Sigmoid colon (tissue), 7 donors: ENCODE measurements at regions of chr6 and their contacts with region 1.

Region 1: GRCh38 chr6:27687154-27688013 is 214.5 kb upstream of the ZNF184 start:
- DNase-seq: peak; percentile 79
- H3K4me3 ChIP-seq: peak overlapping the region; percentile 34 to 50 (median 42)
- H3K27ac ChIP-seq: peak overlapping the region; percentile 32 to 63 (median 55)
- H3K4me1 ChIP-seq: peaks cover 0 to 16% (median 3%) of the 10 kb centered on the region in 4 donors
- H3K27me3 ChIP-seq: peaks cover 0 to 10% (median 7%) of the 10 kb centered on the region in 3 donors
- CTCF ChIP-seq: peak in 3 of 4 experiments; percentile 22 to 52 (median 25)
- EP300 ChIP-seq: no peak
- POLR2A ChIP-seq: no peak

Region 2: GRCh38 chr6:27188885-27189418 is 498.4 kb before region 1 on chr6:
- intact Hi-C with region 1: loop called (anchors 10 kb)
- DNase-seq: peak; percentile 79
- H3K4me3 ChIP-seq: peak overlapping the region; percentile 34 to 62 (median 58)
- H3K27ac ChIP-seq: peak overlapping the region; percentile 75 to 86 (median 79)
- H3K4me1 ChIP-seq: peaks cover 0 to 6% (median 2%) of the 10 kb centered on the region in 4 donors
- H3K27me3 ChIP-seq: no peaks in the 10 kb centered on the region
- CTCF ChIP-seq: peak; percentile 25 to 70 (median 55)
- EP300 ChIP-seq: no peak
- POLR2A ChIP-seq: no peak

Region 3: DNA sequence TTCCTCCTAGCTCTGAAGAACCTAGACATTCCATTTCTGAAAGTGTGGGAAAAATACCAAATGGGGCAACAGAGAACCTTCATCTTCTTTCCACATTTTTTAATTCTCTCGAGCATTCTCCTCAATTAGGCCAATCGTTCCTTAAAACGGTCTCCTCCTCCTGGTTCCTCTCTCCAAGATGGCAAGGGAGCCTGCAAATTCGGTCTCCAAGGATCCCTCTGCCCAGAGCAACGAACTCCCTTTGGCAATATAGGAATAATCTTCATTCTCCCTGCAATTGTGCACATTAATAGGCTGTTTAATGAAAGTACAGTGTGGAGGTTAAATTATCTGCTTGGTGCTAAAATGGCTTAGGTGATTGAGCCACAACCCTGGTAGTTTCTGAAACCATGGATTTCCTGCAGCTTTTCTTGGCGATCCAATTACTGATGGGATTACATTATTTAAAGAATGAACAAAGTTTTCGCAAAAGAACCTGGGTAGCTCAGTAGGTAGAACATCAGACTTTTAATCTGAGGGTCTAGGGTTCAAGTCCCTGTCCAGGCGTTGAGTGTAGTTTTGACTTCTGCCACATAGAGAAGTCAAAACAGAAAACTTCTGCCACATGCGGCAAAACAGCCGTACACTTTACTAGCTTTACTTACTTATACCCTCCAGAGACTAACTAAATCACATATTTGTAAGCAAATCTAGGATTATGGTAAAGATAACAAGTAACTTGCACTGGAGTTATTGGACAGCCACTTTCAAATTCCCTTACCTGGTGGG is 111.6 kb before region 1 on chr6:
- intact Hi-C with region 1: no loop called
- DNase-seq: no peak
- H3K4me3 ChIP-seq: no peak overlapping the region
- H3K27ac ChIP-seq: no peak overlapping the region
- H3K4me1 ChIP-seq: no peaks in the 10 kb centered on the region
- H3K27me3 ChIP-seq: peaks cover 0 to 15% (median 0%) of the 10 kb centered on the region in 3 donors
- CTCF ChIP-seq: no peak
- EP300 ChIP-seq: no peak
- POLR2A ChIP-seq: no peak